ENCODE measurements at regions of chr15 and their contacts with region 1.

Region 1: GRCh38 chr15:68672781-68673205 is 94.0 kb downstream of the CORO2B start:
- DNase-seq: peak; percentile 46
- H3K4me3 ChIP-seq: no peak overlapping the region
- H3K27ac ChIP-seq: no peak overlapping the region
- H3K4me1 ChIP-seq: peaks cover 3% of the 10 kb centered on the region
- H3K27me3 ChIP-seq: no peaks in the 10 kb centered on the region
- CTCF ChIP-seq: peak; percentile 51

Region 2: GRCh38 chr15:68492855-68493254 is 179.9 kb before region 1 on chr15:
- CTCF ChIA-PET with region 1: interaction called, 12 read pairs
- POLR2A ChIA-PET with region 1: no interaction called
- intact Hi-C with region 1: no loop called
- DNase-seq: no peak
- H3K4me3 ChIP-seq: no peak overlapping the region
- H3K27ac ChIP-seq: no peak overlapping the region
- H3K4me1 ChIP-seq: no peaks in the 10 kb centered on the region
- H3K27me3 ChIP-seq: peaks cover 40% of the 10 kb centered on the region
- CTCF ChIP-seq: no peak

Region 3: DNA sequence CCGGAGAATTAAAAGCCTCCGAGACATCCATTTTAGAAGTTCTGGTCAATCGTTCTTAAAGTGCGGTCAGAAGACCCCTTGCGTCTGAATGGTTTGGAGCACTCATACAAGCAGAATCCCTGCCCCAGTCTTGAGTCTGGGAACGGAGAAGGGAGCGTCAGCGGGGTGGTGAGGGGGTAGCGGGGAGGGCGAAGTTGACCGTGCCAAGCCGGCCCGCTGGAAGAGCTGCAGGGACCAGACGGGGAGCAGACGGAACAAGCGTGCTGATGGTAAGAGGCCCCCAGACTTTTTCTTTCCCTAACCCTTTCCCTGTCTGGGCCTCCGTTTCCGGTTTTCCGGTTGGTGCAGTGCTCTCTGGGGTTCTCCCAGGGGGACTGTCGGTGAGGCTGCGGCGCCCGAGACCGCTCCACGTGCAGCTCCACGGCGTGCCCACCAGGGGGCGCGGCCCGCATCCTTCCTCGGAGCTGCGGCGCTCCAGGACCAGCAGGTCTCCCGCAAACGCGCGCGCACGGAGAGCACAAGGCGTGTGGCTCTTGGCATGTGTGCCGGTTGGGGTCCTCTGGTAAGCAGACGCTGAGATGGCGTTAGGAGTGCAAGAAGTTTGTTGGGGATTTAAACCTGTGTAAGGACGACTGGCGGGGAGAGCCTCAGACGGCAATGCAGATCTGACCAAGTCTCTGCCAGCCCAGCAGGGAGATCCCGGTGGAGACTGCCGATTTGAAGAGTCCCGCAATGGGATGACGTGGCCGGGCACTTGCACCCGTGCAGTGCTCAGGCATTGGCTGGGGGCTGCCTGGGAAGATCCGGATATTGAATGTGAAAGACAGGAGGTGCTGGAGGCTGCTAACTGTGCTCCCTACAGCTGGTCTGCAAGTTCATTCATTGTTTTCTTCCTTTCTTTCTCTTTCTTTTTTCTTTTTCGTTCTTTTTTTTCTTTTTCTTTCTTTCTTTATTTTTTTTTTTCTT is 113.2 kb before region 1 on chr15:
- CTCF ChIA-PET with region 1: interaction called, 66 read pairs
- POLR2A ChIA-PET with region 1: no interaction called
- intact Hi-C with region 1: loop called (anchors 1 kb)
- DNase-seq: peak; percentile 93
- H3K4me3 ChIP-seq: peak overlapping the region; percentile 43
- H3K27ac ChIP-seq: peak overlapping the region; percentile 58
- H3K4me1 ChIP-seq: peaks cover 9% of the 10 kb centered on the region
- H3K27me3 ChIP-seq: no peaks in the 10 kb centered on the region
- CTCF ChIP-seq: peak; percentile 99

Region 4: DNA sequence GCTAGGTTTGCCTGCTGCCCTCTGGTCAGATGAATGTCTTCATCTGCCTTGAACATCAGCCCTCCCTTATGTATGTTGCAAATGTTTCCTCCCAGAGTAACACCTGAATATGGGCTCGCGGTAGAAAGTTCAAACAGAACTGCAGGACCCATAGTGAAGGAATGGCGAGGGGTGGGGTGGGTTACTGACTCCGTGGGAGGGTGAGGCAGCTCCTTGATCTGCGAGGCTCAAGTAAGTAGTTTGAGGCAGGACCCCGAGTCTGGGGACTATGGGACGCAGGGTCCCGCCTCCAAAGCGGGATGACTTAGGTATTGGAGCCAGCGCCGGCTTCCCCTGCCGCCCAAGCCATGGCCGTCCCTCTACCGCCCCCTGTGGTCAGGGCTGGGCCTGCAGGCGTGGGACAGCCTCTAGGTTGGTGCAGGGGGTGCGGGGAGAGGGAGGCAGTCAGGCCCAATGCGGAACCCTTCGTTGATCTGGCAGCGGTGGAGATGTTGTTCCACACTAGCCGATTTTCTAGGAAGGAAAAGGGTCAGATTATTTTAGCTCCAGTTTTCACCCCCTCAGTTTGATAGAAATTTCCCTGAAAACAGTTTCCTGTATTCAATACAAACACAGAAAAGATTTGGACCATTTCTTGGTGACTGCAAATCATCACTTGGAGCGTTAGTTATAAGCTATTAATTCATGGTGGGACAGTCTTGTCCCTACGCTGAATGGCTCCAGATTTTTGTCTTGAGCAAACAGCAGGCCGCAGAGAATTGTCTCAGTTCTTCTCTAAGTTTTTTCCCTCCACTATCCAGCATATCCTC is 21.7 kb before region 1 on chr15:
- CTCF ChIA-PET with region 1: interaction called, 12 read pairs
- POLR2A ChIA-PET with region 1: interaction called, 13 read pairs
- intact Hi-C with region 1: no loop called
- DNase-seq: peak; percentile 57
- H3K4me3 ChIP-seq: no peak overlapping the region
- H3K27ac ChIP-seq: peak overlapping the region; percentile 57
- H3K4me1 ChIP-seq: peaks cover 41% of the 10 kb centered on the region
- H3K27me3 ChIP-seq: no peaks in the 10 kb centered on the region
- CTCF ChIP-seq: peak; percentile 74

Region 5: DNA sequence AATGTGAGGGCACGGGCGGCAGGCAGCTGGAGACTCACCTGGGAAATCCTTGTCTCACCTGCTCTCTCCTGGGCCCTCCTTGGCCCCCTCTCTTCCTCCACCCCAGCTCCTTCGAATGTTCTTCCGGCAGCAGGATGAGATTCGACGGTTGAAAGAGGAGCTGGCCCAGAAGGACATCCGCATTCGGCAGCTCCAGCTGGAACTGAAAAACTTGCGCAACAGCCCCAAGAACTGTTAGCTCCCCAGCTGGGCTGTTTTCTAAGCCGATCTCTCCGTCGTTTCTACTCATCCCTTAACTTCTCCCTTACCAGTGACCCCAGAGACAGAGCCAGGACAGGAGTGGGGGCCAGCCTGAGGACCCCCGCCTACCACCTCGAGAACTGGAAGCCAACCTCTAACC is 52.9 kb after region 1 on chr15:
- CTCF ChIA-PET with region 1: no interaction called
- POLR2A ChIA-PET with region 1: no interaction called
- intact Hi-C with region 1: no loop called
- DNase-seq: peak; percentile 67
- H3K4me3 ChIP-seq: no peak overlapping the region
- H3K27ac ChIP-seq: no peak overlapping the region
- H3K4me1 ChIP-seq: peaks cover 6% of the 10 kb centered on the region
- H3K27me3 ChIP-seq: no peaks in the 10 kb centered on the region
- CTCF ChIP-seq: no peak

Region 6: GRCh38 chr15:68924866-68925560 is 252.2 kb after region 1 on chr15:
- CTCF ChIA-PET with region 1: interaction called, 10 read pairs
- POLR2A ChIA-PET with region 1: no interaction called
- intact Hi-C with region 1: no loop called
- DNase-seq: peak; percentile 90
- H3K4me3 ChIP-seq: no peak overlapping the region
- H3K27ac ChIP-seq: no peak overlapping the region
- H3K4me1 ChIP-seq: no peaks in the 10 kb centered on the region
- H3K27me3 ChIP-seq: no peaks in the 10 kb centered on the region
- CTCF ChIP-seq: peak; percentile 97

Measured in A673 (cell line).